ENCODE measurements at regions of chr2 and their contacts with region 1.

Region 1: GRCh38 chr2:60707750-60708371 is 48.2 kb upstream of the PAPOLG start:
- DNase-seq: no peak
- ATAC-seq: peak; percentile 64 to 79 (median 71)
- H3K4me3 ChIP-seq: no peak overlapping the region
- H3K27ac ChIP-seq: no peak overlapping the region
- H3K4me1 ChIP-seq: no peaks in the 10 kb centered on the region
- H3K27me3 ChIP-seq: no peaks in the 10 kb centered on the region
- CTCF ChIP-seq: peak; percentile 67 to 76 (median 74)
- POLR2A ChIP-seq: no peak

Region 2: GRCh38 chr2:60641811-60642788 is 65.8 kb before region 1 on chr2:
- intact Hi-C with region 1: no loop called
- DNase-seq: peak in 1 of 3 donors; percentile 21
- ATAC-seq: peak; percentile 54 to 79 (median 66)
- H3K4me3 ChIP-seq: no peak overlapping the region
- H3K27ac ChIP-seq: no peak overlapping the region
- H3K4me1 ChIP-seq: peaks cover 0 to 6% (median 0%) of the 10 kb centered on the region in 4 donors
- H3K27me3 ChIP-seq: no peaks in the 10 kb centered on the region
- CTCF ChIP-seq: peak; percentile 37 to 77 (median 74)
- POLR2A ChIP-seq: no peak

Region 3: DNA sequence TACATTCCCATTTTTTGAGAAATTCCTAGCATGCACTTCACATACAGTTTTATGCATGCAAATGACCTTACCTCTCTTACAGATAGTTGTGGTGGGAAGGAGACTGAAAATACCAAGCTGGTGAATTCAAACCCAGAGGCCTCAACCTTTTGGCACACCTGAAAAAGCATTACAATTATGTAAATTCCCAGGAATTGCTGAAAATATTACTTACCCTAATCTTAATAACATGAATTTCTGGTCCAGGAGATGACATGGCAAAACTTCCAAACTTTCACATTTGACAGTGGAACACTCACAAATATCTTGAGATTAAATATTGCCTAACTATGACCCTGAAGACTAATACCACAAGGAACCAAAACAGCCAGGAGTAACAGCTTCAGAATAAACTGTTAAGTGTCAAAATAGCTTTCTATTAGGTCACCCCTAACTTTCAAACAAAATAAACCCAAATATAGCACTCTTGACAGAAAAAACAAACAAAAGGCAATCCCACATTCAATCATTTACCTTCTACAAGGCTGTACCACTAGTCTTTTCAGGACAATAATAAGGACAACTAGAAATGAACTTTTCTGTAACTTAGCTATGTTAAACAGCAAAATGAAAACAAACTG is 298.7 kb after region 1 on chr2:
- intact Hi-C with region 1: loop called in 1 of 2 experiments (anchors 10 kb)
- DNase-seq: no peak
- ATAC-seq: no peak
- H3K4me3 ChIP-seq: no peak overlapping the region
- H3K27ac ChIP-seq: no peak overlapping the region
- H3K4me1 ChIP-seq: peaks cover 0 to 4% (median 0%) of the 10 kb centered on the region in 4 donors
- H3K27me3 ChIP-seq: no peaks in the 10 kb centered on the region
- CTCF ChIP-seq: no peak
- POLR2A ChIP-seq: no peak

Measured in right lobe of liver (tissue), 6 donors.